ENCODE measurements at regions of chr6 and their contacts with region 1.

Region 1: DNA sequence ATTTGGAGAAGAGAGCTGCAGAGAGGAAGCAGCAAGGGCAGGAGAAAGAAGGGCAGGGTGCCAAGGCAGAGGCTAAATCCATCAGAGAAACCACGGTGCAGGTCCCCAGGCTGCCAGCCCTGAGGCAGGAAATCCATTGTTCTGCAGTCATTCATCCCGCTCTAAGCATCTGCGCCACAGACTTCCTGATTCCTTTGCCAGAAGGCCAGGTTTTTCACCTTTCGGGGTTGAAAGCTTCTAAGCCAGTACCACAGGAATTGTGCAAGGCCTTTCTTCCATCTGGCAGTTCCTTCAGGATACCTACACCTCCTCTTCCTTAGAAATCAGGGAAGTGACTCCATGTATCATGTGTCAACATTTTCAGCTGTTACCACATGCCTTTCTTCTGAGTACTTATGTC is 45.6 kb downstream of the ADGRF5 start:
- DNase-seq: no peak
- ATAC-seq: no peak

Region 2: GRCh38 chr6:46832816-46833215 is 43.3 kb before region 1 on chr6:
- intact Hi-C with region 1: no loop called
- DNase-seq: no peak
- ATAC-seq: no peak

Region 3: GRCh38 chr6:46909371-46909770 is 33.2 kb after region 1 on chr6:
- intact Hi-C with region 1: loop called (anchors 5 kb)
- DNase-seq: no peak
- ATAC-seq: no peak

Region 4: DNA sequence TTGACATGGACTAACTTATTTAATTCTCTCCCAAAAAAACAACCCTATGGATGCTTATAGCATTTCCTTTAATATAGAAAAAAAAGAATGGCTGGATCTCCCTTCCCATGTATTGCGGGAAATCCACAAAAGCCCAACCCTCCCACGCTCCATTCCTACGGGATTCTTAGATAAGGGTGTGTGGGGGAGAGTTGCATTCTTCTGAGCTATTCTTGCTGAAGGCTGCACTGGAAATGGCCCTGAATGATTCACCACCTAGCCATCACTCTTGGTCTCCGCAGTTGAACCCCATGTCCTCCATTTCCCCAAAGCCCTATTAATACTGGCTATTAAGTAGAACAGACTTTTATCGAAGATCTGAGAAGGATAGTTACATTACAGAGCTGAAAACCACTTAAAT is 87.5 kb after region 1 on chr6:
- intact Hi-C with region 1: no loop called
- DNase-seq: no peak
- ATAC-seq: peak; percentile 44

Measured in Right ventricle myocardium inferior (tissue), 1 donor.